ENCODE measurements at regions of chr3 and their contacts with region 1.

Region 1: DNA sequence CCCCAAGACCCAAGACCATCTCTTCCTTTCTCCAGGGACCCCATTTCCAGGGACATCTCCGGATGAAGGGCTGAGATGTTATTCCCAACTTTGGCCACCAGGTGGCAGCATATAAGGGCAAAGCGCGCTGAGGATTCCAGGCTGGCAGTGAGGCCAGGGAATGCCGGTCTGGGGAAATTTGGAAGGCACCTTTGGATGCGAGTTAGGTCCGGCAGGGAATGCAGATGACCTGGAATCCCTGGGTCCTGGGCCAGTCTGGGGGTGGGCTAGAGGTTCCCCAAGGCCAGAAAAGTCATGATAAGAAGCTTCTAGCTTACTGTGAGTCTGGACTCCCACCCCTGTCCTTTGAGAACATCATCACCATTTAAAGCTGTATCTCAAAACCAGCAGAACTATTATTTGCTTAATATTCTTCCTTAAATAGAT is 1.6 kb upstream of the CHST13 start:
- DNase-seq: peak; percentile 75
- ATAC-seq: no peak

Region 2: GRCh38 chr3:126570103-126570541 is 47.7 kb after region 1 on chr3:
- intact Hi-C with region 1: loop called (anchors 5 kb)
- DNase-seq: no peak
- ATAC-seq: no peak

Region 3: GRCh38 chr3:126654571-126655383 is 132.4 kb after region 1 on chr3 and contains the start of gene TXNRD3:
- intact Hi-C with region 1: loop called (anchors 10 kb)
- DNase-seq: peak; percentile 90
- ATAC-seq: peak; percentile 98
- total RNA-seq, gene TXNRD3: 3.5 TPM

Region 4: GRCh38 chr3:127455541-127456450 is 933.4 kb after region 1 on chr3:
- intact Hi-C with region 1: loop called (anchors 5 kb)
- DNase-seq: peak; percentile 80
- ATAC-seq: peak; percentile 90

Region 5: DNA sequence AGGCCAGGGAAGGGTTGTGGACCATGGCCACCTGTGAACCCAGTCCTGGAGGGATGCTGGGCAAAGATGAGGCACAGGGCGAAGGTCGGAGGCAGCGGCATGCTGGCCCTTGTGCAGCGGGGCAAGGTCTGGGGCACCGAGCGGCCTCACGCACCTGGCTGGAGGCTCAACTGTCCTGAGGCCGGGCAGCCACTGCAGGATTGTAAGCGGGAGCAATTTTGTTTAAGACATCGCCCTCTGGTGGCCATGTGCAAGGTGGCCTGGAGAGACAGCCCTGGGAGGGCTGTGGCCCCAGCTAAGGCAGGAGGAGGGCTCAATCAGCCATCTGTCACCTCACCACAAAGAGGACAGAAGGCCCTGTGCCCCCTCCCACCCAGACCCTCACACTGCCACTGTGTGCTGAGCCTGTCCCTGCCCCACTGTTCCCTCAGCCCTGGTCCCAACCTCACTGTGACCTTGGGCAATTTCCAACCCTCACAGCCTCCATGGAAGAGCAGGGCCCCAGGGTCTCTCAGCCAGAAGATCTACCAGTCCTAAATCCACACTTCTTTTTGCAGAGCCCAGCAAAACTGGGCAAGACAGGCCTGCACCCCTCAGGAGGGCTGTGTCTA is 1021.9 kb after region 1 on chr3:
- intact Hi-C with region 1: loop called (anchors 2 kb)
- DNase-seq: peak; percentile 79
- ATAC-seq: peak; percentile 33

Measured in Right ventricle myocardium inferior (tissue), 1 donor.